ENCODE measurements at regions of chr10 and their contacts with region 1.

Region 1: GRCh38 chr10:86376852-86377796 is 10.5 kb upstream of the GRID1 start:
- DNase-seq: peak; percentile 89
- ATAC-seq: peak; percentile 97
- H3K4me3 Mint-ChIP-seq: no peak overlapping the region
- H3K27ac Mint-ChIP-seq: no peak overlapping the region
- H3K4me1 Mint-ChIP-seq: no peaks in the 10 kb centered on the region
- H3K27me3 Mint-ChIP-seq: peaks cover 20% of the 10 kb centered on the region

Region 2: DNA sequence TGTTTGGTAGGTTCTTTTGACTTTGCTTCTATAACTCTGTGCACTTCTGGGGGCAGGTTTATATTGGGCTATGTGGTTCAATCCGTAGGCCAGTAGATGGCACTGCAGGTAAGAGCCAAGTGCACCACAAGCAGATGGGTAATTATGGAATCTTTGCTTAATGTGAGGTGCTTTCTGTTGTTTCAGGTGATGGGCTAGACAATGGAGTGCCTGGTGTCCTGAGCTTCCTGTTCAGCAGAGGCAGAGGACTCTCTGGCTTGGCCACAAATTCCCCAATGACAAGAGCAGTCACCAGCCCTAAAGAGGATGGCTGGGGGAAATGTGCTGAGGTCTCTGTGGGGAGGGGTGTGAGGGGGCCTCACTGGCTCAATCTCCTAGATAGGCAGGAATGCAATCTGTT is 1593.7 kb before region 1 on chr10:
- CTCF ChIA-PET with region 1: no interaction called
- POLR2A ChIA-PET with region 1: no interaction called
- intact Hi-C with region 1: loop called (anchors 1 to 10 kb)
- DNase-seq: peak; percentile 27
- ATAC-seq: peak; percentile 44
- H3K4me3 Mint-ChIP-seq: no peak overlapping the region
- H3K27ac Mint-ChIP-seq: no peak overlapping the region
- H3K4me1 Mint-ChIP-seq: no peaks in the 10 kb centered on the region
- H3K27me3 Mint-ChIP-seq: peaks cover 2% of the 10 kb centered on the region

Region 3: DNA sequence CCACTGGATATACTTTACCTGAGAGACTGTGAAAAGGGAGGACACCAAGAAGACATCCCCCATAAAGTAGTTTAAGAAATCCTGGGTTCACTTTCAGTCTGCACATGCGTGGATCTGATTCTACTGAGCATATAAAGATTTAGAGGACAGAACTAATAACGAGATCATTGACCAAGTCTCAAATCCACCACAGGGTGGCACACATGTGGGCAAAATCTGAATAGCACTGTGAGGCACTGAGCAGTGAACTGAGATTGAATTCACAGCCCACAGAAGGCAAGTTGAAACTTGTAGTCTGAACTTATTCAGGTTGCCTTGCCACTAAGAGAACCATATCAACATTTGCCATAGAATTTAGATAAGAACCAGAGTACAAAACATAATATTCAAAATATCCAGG is 829.1 kb before region 1 on chr10:
- CTCF ChIA-PET with region 1: no interaction called
- POLR2A ChIA-PET with region 1: no interaction called
- intact Hi-C with region 1: loop called (anchors 2 to 10 kb)
- DNase-seq: peak; percentile 38
- ATAC-seq: no peak
- H3K4me3 Mint-ChIP-seq: no peak overlapping the region
- H3K27ac Mint-ChIP-seq: no peak overlapping the region
- H3K4me1 Mint-ChIP-seq: no peaks in the 10 kb centered on the region
- H3K27me3 Mint-ChIP-seq: peaks cover 6% of the 10 kb centered on the region

Region 4: DNA sequence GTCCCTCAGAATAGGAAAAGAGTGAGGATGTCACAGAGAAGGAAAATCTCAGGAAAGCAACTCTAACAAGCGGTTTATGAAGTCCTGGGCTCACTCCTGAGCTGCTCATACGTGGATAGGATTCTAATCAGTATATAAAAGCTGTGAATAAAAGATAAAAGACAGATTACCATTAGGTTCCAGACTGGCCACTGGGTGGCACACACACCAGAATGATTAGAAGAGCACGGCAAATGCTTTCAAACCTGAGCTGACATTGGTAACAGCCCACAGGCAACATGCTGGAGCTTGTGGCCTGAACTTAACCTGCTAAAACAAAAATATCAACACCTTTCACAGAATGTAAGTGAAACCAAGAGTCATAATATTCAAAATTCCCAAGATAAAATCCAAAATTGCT is 381.3 kb before region 1 on chr10:
- CTCF ChIA-PET with region 1: no interaction called
- POLR2A ChIA-PET with region 1: no interaction called
- intact Hi-C with region 1: loop called (anchors 1 to 2 kb)
- DNase-seq: peak; percentile 50
- ATAC-seq: no peak
- H3K4me3 Mint-ChIP-seq: no peak overlapping the region
- H3K27ac Mint-ChIP-seq: no peak overlapping the region
- H3K4me1 Mint-ChIP-seq: no peaks in the 10 kb centered on the region
- H3K27me3 Mint-ChIP-seq: peaks cover 14% of the 10 kb centered on the region

Region 5: GRCh38 chr10:86155054-86155921 is 221.8 kb before region 1 on chr10:
- CTCF ChIA-PET with region 1: no interaction called
- POLR2A ChIA-PET with region 1: no interaction called
- intact Hi-C with region 1: loop called in 1 of 2 experiments (anchors 10 kb)
- DNase-seq: no peak
- ATAC-seq: no peak
- H3K4me3 Mint-ChIP-seq: no peak overlapping the region
- H3K27ac Mint-ChIP-seq: no peak overlapping the region
- H3K4me1 Mint-ChIP-seq: no peaks in the 10 kb centered on the region
- H3K27me3 Mint-ChIP-seq: no peaks in the 10 kb centered on the region

Region 6: GRCh38 chr10:86782701-86783418 is 405.7 kb after region 1 on chr10:
- CTCF ChIA-PET with region 1: no interaction called
- POLR2A ChIA-PET with region 1: no interaction called
- intact Hi-C with region 1: no loop called
- DNase-seq: no peak
- ATAC-seq: no peak
- H3K4me3 Mint-ChIP-seq: no peak overlapping the region
- H3K27ac Mint-ChIP-seq: no peak overlapping the region
- H3K4me1 Mint-ChIP-seq: peaks cover 6% of the 10 kb centered on the region
- H3K27me3 Mint-ChIP-seq: peaks cover 2% of the 10 kb centered on the region

Measured in activated CD4-positive, alpha-beta T cell treated with anti-CD3 and anti-CD28 coated beads for 36 hours (primary cell).